ENCODE measurements at regions of chr1 and their contacts with region 1.

Region 1: GRCh38 chr1:181424786-181425403 is 58.4 kb upstream of the CACNA1E start:
- DNase-seq: peak; percentile 85

Region 2: GRCh38 chr1:181105134-181106021 is 319.5 kb before region 1 on chr1:
- CTCF ChIA-PET with region 1: no interaction called
- POLR2A ChIA-PET with region 1: no interaction called
- DNase-seq: peak; percentile 94

Region 3: GRCh38 chr1:181189691-181190363 is 235.1 kb before region 1 on chr1:
- CTCF ChIA-PET with region 1: interaction called, 15 read pairs
- POLR2A ChIA-PET with region 1: no interaction called
- DNase-seq: peak; percentile 96

Region 4: DNA sequence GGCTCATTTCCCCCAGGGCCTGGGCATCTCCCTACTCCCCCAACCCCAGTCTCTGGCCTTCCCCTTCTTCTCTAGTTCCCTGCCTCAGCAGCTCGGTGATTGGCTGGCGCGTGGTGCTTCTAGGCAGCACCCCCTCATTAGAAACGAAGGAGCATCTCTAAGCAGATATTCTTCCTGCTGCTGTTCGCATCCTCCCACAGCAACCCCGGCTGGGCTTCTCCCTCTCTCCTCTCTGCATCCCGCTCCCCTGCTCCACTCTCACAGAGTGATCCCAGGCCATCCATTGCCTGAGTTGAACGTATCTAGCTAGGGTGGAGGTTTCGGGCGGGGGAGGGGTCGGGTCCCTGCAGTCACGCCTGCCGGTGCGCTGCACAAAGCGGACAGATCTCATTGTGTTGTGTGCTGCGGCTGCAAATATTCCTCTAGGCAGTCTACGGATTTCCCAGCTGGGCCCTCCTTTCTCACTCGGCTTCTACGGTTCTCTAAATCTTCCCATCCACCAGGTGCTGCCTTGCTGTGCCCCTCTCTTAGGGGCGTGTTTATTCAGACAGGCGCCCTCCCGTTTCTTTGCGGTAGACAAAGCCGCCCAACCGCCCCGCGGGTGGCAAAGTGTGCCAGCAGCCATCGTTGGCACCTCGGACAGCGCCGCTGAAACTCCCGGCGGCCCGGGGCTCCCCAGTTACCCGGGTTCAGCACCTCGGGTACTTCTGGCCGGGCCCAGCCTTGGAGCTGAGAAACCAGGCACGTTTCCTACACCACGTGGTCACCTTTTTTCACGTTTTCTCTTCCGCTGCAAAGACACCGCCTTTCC is 60.6 kb after region 1 on chr1:
- CTCF ChIA-PET with region 1: no interaction called
- POLR2A ChIA-PET with region 1: no interaction called
- DNase-seq: no peak

Region 5: DNA sequence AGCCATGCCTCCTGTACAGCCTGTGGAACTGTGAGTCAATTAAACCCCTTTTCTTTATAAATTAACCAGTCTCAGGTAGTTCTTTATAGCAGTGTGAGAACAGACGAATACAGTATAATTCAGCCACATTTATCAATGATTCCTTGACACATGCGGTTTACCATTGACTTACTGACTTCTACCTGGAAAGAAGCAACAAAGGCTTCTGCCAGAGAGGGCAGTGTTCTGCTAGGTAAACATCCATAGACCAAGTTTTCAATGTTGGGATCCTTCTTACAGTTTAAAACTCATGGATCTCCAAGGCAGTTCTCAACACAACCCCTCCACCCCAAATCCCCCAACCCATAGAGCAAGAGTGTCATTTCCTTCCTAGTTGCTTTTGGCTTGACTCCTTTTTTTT is 486.0 kb after region 1 on chr1:
- CTCF ChIA-PET with region 1: interaction called, 12 read pairs
- POLR2A ChIA-PET with region 1: no interaction called
- DNase-seq: peak; percentile 30

Measured in HEK293T (cell line).